ENCODE measurements at regions of chr12 and their contacts with region 1.

Region 1: GRCh38 chr12:81668475-81668874 is 90.7 kb downstream of the PPFIA2 start:
- DNase-seq: peak; percentile 29
- ATAC-seq: peak; percentile 99
- H3K4me3 Mint-ChIP-seq: no peak overlapping the region
- H3K27ac Mint-ChIP-seq: no peak overlapping the region
- H3K4me1 Mint-ChIP-seq: peaks cover 5% of the 10 kb centered on the region
- H3K27me3 Mint-ChIP-seq: peaks cover 5% of the 10 kb centered on the region

Region 2: GRCh38 chr12:81585787-81586186 is 82.7 kb before region 1 on chr12:
- CTCF ChIA-PET with region 1: no interaction called
- POLR2A ChIA-PET with region 1: no interaction called
- intact Hi-C with region 1: no loop called
- DNase-seq: no peak
- ATAC-seq: no peak
- H3K4me3 Mint-ChIP-seq: no peak overlapping the region
- H3K27ac Mint-ChIP-seq: no peak overlapping the region
- H3K4me1 Mint-ChIP-seq: no peaks in the 10 kb centered on the region
- H3K27me3 Mint-ChIP-seq: no peaks in the 10 kb centered on the region

Region 3: DNA sequence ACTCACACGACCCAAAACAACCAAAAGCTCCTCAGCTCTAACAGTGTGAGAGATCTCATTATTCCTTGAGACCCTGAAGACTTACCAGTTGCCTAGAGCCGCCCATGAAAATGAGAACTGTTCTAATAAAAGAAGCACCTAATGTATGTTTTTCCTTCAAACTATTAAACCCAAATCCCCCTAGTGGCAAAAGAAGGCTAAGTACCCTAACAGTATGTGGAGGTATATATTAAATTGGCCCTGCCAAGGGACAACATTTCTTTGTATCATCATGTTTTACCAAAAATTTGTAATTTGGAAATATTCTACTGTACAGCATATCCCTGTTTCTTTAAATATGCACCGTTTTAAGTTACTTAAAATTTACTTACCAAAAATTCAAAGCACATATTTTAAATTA is 128.6 kb after region 1 on chr12:
- CTCF ChIA-PET with region 1: no interaction called
- POLR2A ChIA-PET with region 1: no interaction called
- intact Hi-C with region 1: loop called in 1 of 2 experiments (anchors 1 kb)
- DNase-seq: no peak
- ATAC-seq: no peak
- H3K4me3 Mint-ChIP-seq: no peak overlapping the region
- H3K27ac Mint-ChIP-seq: no peak overlapping the region
- H3K4me1 Mint-ChIP-seq: peaks cover 15% of the 10 kb centered on the region
- H3K27me3 Mint-ChIP-seq: peaks cover 19% of the 10 kb centered on the region

Region 4: DNA sequence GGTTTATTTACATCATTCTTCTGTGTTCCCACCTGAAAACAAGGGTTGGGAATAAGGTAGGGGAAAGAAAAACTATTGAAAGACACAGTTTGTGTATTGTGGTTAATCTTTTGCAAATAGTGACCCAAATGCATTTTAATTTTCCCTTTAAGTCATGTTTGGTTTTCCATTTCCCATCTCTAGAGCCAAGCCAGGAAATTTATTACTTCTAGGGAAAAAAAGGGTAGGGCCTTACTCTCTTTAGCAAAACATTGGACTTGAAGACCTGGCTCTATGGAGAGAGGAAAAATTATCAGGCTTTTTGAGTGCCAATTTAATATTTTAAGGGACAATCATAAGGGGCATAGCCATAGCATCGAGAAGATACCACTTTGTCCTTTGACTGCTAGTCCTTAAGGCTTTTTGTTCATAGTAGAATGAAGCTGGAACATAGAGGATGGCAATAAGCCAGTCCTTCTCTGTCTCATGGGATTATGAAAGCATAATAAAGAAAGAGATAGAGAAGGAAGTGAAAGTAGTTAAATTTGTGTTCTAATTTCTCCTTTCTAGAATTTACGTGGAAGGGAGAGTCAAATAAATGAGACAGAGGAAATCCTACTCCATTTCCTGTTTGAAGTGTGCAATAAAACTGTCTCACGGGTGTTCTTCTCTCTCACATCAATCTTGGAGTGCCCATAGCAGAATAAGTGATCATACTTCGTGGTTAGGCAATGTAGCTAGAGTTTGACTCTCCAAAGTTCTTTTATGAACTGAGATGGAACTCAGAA is 141.5 kb after region 1 on chr12:
- CTCF ChIA-PET with region 1: no interaction called
- POLR2A ChIA-PET with region 1: no interaction called
- intact Hi-C with region 1: loop called in 1 of 2 experiments (anchors 5 kb)
- DNase-seq: no peak
- ATAC-seq: peak; percentile 85
- H3K4me3 Mint-ChIP-seq: no peak overlapping the region
- H3K27ac Mint-ChIP-seq: no peak overlapping the region
- H3K4me1 Mint-ChIP-seq: peaks cover 19% of the 10 kb centered on the region
- H3K27me3 Mint-ChIP-seq: peaks cover 20% of the 10 kb centered on the region

Region 5: DNA sequence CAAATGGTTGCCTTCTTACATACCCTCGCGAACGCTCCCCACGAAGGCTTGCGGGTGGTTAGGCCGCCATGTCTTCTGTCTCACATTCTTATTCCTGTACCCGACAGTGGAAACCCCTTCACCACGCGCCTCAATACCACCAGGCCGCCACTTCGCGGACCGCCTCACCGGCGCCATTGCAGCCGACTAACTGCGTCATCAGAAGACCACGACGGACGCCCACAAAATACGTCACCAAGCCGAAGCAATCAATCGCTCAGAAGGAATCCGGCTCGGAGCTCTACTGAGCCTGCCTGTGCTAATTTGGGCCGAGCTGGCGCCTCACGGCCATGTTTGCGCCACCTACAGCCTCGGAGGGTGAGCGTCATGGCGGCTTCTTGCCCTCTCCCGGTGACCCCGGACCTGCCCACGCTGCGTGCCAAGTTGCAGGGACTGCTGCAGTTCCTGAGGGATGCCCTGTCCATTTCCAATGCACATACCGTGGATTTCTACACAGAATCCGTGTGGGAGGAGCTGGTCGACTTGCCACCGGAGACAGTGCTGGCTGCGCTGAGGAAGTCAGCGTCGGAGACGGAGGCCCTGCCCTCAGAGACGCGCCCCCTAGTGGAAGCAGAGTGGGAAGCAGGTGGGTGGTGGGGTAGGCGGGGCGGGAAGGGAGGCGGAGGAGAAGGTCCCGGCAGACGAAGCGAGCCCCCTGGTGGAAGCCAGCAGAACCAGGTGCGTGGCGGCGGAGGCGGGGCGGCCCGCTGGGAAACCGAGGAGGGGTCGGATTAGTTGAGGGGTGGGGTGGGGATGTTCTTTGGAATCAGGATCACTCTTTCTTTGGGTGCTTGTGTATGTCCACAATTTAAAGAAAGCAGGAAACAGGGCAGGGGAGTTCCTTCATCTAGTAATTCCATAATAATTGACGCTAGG is 690.0 kb after region 1 on chr12 and contains the starts of genes CCDC59 and METTL25:
- CTCF ChIA-PET with region 1: no interaction called
- POLR2A ChIA-PET with region 1: no interaction called
- intact Hi-C with region 1: loop called in 1 of 2 experiments (anchors 1 kb)
- DNase-seq: peak; percentile 98
- ATAC-seq: peak; percentile 96
- H3K4me3 Mint-ChIP-seq: peak within 1 kb of the TSS; percentile 98
- H3K27ac Mint-ChIP-seq: peak within 1 kb of the TSS; percentile 99
- H3K4me1 Mint-ChIP-seq: peaks cover 44% of the 10 kb centered on the region
- H3K27me3 Mint-ChIP-seq: no peaks in the 10 kb centered on the region
- total RNA-seq, gene CCDC59: 104 to 137 TPM
- total RNA-seq, gene METTL25: 5.0 to 5.3 TPM